Panc1 (cell line): ENCODE measurements at regions of chr1 and their contacts with region 1.

Region 1: GRCh38 chr1:67227196-67227595 is 60.9 kb downstream of the IL23R start:
- DNase-seq: no peak
- ATAC-seq: no peak
- H3K4me3 ChIP-seq: no peak overlapping the region
- H3K27ac ChIP-seq: no peak overlapping the region
- H3K4me1 ChIP-seq: no peaks in the 10 kb centered on the region
- H3K27me3 ChIP-seq: peaks cover 4% of the 10 kb centered on the region; the same call in 1 of the 2 replicates
- CTCF ChIP-seq: no peak

Region 2: GRCh38 chr1:67013573-67013972 is 213.6 kb before region 1 on chr1:
- CTCF ChIA-PET with region 1: no interaction called
- POLR2A ChIA-PET with region 1: no interaction called
- in situ Hi-C with region 1: no loop called
- intact Hi-C with region 1: no loop called
- DNase-seq: no peak
- ATAC-seq: no peak
- H3K4me3 ChIP-seq: no peak overlapping the region
- H3K27ac ChIP-seq: no peak overlapping the region
- H3K4me1 ChIP-seq: no peaks in the 10 kb centered on the region
- H3K27me3 ChIP-seq: no peaks in the 10 kb centered on the region
- CTCF ChIP-seq: no peak

Region 3: DNA sequence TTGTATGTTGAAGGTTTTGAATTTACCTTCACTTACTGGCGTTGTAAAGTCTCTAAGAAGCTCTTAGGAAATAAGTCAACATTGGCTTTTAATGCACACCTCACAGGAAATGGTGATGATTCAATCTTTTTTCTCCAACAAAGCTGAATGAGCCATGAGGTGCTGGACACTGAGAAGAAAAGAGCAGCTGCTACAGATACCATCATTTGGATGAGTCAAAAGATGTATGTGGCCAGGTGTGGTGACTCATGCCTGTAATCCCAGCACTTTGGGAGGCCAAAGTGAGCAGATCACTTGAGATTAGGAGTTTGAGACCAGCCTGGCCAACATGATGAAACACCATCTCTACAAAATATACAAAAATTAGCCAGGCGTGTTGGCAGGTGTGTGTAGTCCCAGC is 64.2 kb before region 1 on chr1:
- CTCF ChIA-PET with region 1: no interaction called
- POLR2A ChIA-PET with region 1: interaction called, 13 read pairs
- in situ Hi-C with region 1: no loop called
- intact Hi-C with region 1: no loop called
- DNase-seq: peak; percentile 74
- ATAC-seq: no peak
- H3K4me3 ChIP-seq: no peak overlapping the region
- H3K27ac ChIP-seq: no peak overlapping the region
- H3K4me1 ChIP-seq: no peaks in the 10 kb centered on the region
- H3K27me3 ChIP-seq: no peaks in the 10 kb centered on the region
- CTCF ChIP-seq: no peak

Region 4: DNA sequence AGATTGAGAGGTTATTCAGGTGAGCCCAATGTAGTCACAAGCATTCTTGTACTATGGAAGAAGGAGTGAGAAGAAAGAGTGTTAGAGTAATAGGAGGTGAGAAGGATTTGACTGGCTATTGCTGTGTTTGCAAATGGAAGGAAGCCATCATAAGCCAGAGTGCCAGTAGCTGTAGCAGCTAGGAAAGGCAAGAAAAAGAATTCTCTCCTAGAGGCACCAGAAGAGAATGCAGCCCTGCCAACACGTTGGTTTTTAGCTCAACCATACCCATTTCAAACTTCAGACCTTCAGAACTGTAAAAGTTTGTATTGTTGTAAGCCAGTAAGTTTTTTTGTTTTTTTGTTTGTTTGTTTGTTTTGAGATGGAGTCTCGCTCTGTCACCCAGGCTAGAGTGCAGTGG is 71.6 kb after region 1 on chr1:
- CTCF ChIA-PET with region 1: no interaction called
- POLR2A ChIA-PET with region 1: no interaction called
- in situ Hi-C with region 1: no loop called
- intact Hi-C with region 1: no loop called
- DNase-seq: no peak
- ATAC-seq: no peak
- H3K4me3 ChIP-seq: no peak overlapping the region
- H3K27ac ChIP-seq: no peak overlapping the region
- H3K4me1 ChIP-seq: no peaks in the 10 kb centered on the region
- H3K27me3 ChIP-seq: peaks cover 5% of the 10 kb centered on the region; the same call in 1 of the 2 replicates
- CTCF ChIP-seq: no peak

Region 5: DNA sequence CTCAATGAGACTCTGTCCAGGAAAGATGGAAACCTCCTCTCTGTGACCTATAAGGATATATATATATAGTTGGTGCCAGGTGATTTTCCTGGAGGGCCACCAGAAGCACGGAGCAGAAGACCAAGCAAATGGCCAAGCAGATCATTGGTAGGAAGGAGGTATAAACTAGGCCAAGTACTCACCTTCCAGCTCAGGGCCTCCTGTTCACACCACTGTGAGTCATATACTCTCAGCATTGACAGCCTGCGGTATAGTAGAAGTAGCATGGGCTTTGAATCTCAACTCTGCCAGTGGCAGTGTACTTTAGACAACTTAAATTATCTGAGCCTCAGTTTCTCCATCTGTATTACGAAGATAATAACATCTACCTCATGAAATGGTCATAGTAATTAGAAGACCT is 95.9 kb after region 1 on chr1:
- CTCF ChIA-PET with region 1: no interaction called
- POLR2A ChIA-PET with region 1: no interaction called
- in situ Hi-C with region 1: no loop called
- intact Hi-C with region 1: loop called (anchors 10 kb)
- DNase-seq: no peak
- ATAC-seq: no peak
- H3K4me3 ChIP-seq: no peak overlapping the region
- H3K27ac ChIP-seq: no peak overlapping the region
- H3K4me1 ChIP-seq: no peaks in the 10 kb centered on the region
- H3K27me3 ChIP-seq: peaks cover 20% of the 10 kb centered on the region
- CTCF ChIP-seq: no peak

Region 6: GRCh38 chr1:67404212-67404620 is 177.0 kb after region 1 on chr1:
- CTCF ChIA-PET with region 1: no interaction called
- POLR2A ChIA-PET with region 1: no interaction called
- in situ Hi-C with region 1: no loop called
- intact Hi-C with region 1: loop called (anchors 10 kb)
- DNase-seq: no peak
- ATAC-seq: no peak
- H3K4me3 ChIP-seq: no peak overlapping the region
- H3K27ac ChIP-seq: no peak overlapping the region
- H3K4me1 ChIP-seq: no peaks in the 10 kb centered on the region
- H3K27me3 ChIP-seq: no peaks in the 10 kb centered on the region
- CTCF ChIP-seq: no peak